ENCODE measurements at regions of chr5 and their contacts with region 1.

Region 1: GRCh38 chr5:43313035-43313853 is at the start of gene HMGCS1:
- DNase-seq: peak; percentile 100
- ATAC-seq: peak; percentile 84
- H3K4me3 ChIP-seq: peak within 1 kb of the TSS; percentile 77 to 94 (median 89)
- H3K4me3 Mint-ChIP-seq: peak within 1 kb of the TSS; percentile 99
- H3K27ac ChIP-seq: peak within 1 kb of the TSS; percentile 95 to 98
- H3K27ac Mint-ChIP-seq: peak within 1 kb of the TSS; percentile 97
- H3K4me1 ChIP-seq: peaks cover 18 to 31% of the 10 kb centered on the region in 2 donors
- H3K4me1 Mint-ChIP-seq: peaks cover 39% of the 10 kb centered on the region
- H3K27me3 ChIP-seq: no peaks in the 10 kb centered on the region
- H3K27me3 Mint-ChIP-seq: no peaks in the 10 kb centered on the region
- CTCF ChIP-seq: no peak
- total RNA-seq, gene HMGCS1: 68.4 and 68.7 TPM in 2 replicates

Region 2: GRCh38 chr5:42908509-42909488 is 404.4 kb before region 1 on chr5:
- CTCF ChIA-PET with region 1: interaction called, 13 read pairs
- POLR2A ChIA-PET with region 1: no interaction called
- intact Hi-C with region 1: loop called (anchors 2 kb)
- DNase-seq: peak; percentile 93
- ATAC-seq: peak; percentile 96
- H3K4me3 ChIP-seq: peak overlapping the region; percentile 52 to 88 (median 72)
- H3K4me3 Mint-ChIP-seq: peak overlapping the region; percentile 98
- H3K27ac ChIP-seq: peak overlapping the region in 1 of 2 donors; percentile 6
- H3K27ac Mint-ChIP-seq: peak overlapping the region; percentile 93
- H3K4me1 ChIP-seq: peaks cover 5 to 9% of the 10 kb centered on the region in 2 donors
- H3K4me1 Mint-ChIP-seq: peaks cover 10% of the 10 kb centered on the region
- H3K27me3 ChIP-seq: peaks cover 0 to 7% (median 2%) of the 10 kb centered on the region in 4 experiments
- H3K27me3 Mint-ChIP-seq: peaks cover 21% of the 10 kb centered on the region
- CTCF ChIP-seq: peak; percentile 88

Region 3: DNA sequence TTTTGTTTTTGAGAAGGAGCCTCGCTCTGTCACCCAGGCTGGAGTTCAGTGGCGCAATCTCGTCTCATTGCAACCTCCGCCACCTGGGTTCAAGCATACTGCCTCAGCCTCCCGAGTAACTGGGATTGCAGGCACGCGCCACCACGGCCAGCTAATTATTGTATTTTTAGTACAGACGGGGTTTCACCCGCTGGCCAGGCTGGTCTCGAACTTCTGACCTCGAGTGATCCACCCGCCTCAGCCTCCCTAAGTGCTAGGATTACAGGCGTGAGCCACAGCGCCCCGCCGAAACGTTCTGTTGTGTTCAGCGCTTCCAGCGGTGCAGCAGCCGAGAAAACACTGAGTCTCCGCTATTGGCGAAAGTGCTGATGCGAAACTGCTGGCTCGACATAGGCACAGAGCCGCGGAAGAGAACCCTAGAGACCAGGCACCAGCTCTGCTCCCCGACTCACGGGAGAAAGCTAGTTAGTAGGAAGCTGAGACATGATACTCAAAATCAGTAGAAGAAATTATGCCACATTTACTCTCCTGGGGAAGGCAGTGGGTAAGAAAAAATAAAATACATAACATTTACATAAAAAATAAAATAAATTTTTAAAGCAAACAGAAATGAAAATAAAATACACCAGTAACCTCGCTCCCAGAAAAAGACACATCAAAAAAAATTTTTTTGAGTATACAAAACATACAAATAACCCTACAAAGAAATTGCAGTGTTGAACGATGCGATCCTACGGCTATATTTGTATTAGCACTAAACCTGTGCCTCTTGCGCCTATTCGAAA is 304.7 kb before region 1 on chr5:
- CTCF ChIA-PET with region 1: no interaction called
- POLR2A ChIA-PET with region 1: interaction called, 4 read pairs
- intact Hi-C with region 1: loop called (anchors 1 kb)
- DNase-seq: peak; percentile 95
- ATAC-seq: peak; percentile 58
- H3K4me3 ChIP-seq: peak overlapping the region; percentile 69 to 99 (median 76)
- H3K4me3 Mint-ChIP-seq: peak overlapping the region; percentile 89
- H3K27ac ChIP-seq: peak overlapping the region; percentile 83 to 97
- H3K27ac Mint-ChIP-seq: peak overlapping the region; percentile 98
- H3K4me1 ChIP-seq: peaks cover 20 to 38% of the 10 kb centered on the region in 2 donors
- H3K4me1 Mint-ChIP-seq: peaks cover 31% of the 10 kb centered on the region
- H3K27me3 ChIP-seq: no peaks in the 10 kb centered on the region
- H3K27me3 Mint-ChIP-seq: no peaks in the 10 kb centered on the region
- CTCF ChIP-seq: peak; percentile 36

Region 4: DNA sequence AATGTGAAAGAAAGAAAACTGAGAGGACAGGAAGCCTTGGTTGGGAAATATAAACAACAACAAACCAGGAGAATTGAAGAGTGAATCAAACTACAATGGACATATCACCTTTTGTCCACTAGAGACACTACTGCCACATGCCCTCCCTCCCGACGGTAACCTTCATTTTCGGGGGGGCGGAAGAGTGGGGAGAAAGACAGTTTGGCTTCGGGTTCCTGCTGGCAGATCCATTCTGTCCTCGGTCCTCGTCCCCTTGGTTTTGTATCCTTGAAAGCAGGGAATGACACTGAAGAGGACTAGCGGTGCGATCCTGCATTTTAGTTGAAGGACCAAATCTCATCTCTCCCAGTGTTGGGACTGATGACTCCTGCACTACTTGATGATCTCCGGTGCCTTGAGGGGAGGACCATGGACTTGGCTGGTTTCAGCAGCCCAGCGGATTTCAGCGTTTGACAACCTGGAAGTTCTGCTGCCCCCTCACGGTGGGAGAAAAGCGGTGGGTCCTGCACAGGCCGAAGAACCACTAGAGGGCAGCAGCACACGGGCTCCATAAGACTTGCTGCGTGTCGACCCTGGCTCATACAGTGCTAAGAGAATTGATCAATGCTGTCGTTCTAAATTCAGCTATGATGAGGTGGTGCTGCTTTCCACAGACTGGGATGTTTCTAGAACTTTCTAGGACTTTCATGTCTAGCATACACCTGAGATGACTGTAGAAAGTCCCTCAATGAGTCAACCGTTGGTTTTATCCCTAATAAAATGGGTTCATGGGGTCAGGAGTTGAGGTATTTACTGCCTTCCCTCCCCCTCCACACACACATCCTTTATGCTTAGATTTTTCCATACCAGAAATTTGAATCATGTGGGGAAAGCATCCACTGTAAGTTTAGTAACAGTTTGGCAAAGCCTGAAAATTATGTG is 207.6 kb before region 1 on chr5:
- CTCF ChIA-PET with region 1: interaction called, 3 read pairs
- POLR2A ChIA-PET with region 1: no interaction called
- intact Hi-C with region 1: loop called (anchors 1 kb)
- DNase-seq: peak; percentile 94
- ATAC-seq: peak; percentile 97
- H3K4me3 ChIP-seq: peak overlapping the region; percentile 58 to 85 (median 66)
- H3K4me3 Mint-ChIP-seq: peak overlapping the region; percentile 90
- H3K27ac ChIP-seq: peak overlapping the region; percentile 49 to 71
- H3K27ac Mint-ChIP-seq: peak overlapping the region; percentile 83
- H3K4me1 ChIP-seq: peaks cover 0 to 12% of the 10 kb centered on the region in 2 donors
- H3K4me1 Mint-ChIP-seq: peaks cover 11% of the 10 kb centered on the region
- H3K27me3 ChIP-seq: no peaks in the 10 kb centered on the region
- H3K27me3 Mint-ChIP-seq: no peaks in the 10 kb centered on the region
- CTCF ChIP-seq: peak; percentile 100

Region 5: GRCh38 chr5:43484106-43484849 is 171.0 kb after region 1 on chr5:
- CTCF ChIA-PET with region 1: interaction called, 41 read pairs
- POLR2A ChIA-PET with region 1: interaction called, 38 read pairs
- intact Hi-C with region 1: loop called (anchors 1 kb)
- DNase-seq: peak; percentile 93
- ATAC-seq: peak; percentile 68
- H3K4me3 ChIP-seq: peak overlapping the region; percentile 58 to 92 (median 89)
- H3K4me3 Mint-ChIP-seq: peak overlapping the region; percentile 100
- H3K27ac ChIP-seq: peak overlapping the region; percentile 94 to 99
- H3K27ac Mint-ChIP-seq: peak overlapping the region; percentile 100
- H3K4me1 ChIP-seq: peaks cover 22 to 23% of the 10 kb centered on the region in 2 donors
- H3K4me1 Mint-ChIP-seq: peaks cover 33% of the 10 kb centered on the region
- H3K27me3 ChIP-seq: no peaks in the 10 kb centered on the region
- H3K27me3 Mint-ChIP-seq: no peaks in the 10 kb centered on the region
- CTCF ChIP-seq: peak; percentile 81

Region 6: GRCh38 chr5:43602461-43603343 is 289.5 kb after region 1 on chr5 and contains the start of gene NNT:
- CTCF ChIA-PET with region 1: no interaction called
- POLR2A ChIA-PET with region 1: interaction called, 5 read pairs
- intact Hi-C with region 1: loop called (anchors 1 kb)
- DNase-seq: peak; percentile 83
- ATAC-seq: peak; percentile 71
- H3K4me3 ChIP-seq: peak within 1 kb of the TSS; percentile 65 to 99 (median 80)
- H3K4me3 Mint-ChIP-seq: peak within 1 kb of the TSS; percentile 95
- H3K27ac ChIP-seq: peak within 1 kb of the TSS; percentile 75 to 89
- H3K27ac Mint-ChIP-seq: peak within 1 kb of the TSS; percentile 91
- H3K4me1 ChIP-seq: peaks cover 16 to 24% of the 10 kb centered on the region in 2 donors
- H3K4me1 Mint-ChIP-seq: peaks cover 34% of the 10 kb centered on the region
- H3K27me3 ChIP-seq: no peaks in the 10 kb centered on the region
- H3K27me3 Mint-ChIP-seq: no peaks in the 10 kb centered on the region
- CTCF ChIP-seq: no peak
- total RNA-seq, gene NNT: 61.1 and 63.0 TPM in 2 replicates